ENCODE measurements at regions of chr7 and their contacts with region 1.

Region 1: DNA sequence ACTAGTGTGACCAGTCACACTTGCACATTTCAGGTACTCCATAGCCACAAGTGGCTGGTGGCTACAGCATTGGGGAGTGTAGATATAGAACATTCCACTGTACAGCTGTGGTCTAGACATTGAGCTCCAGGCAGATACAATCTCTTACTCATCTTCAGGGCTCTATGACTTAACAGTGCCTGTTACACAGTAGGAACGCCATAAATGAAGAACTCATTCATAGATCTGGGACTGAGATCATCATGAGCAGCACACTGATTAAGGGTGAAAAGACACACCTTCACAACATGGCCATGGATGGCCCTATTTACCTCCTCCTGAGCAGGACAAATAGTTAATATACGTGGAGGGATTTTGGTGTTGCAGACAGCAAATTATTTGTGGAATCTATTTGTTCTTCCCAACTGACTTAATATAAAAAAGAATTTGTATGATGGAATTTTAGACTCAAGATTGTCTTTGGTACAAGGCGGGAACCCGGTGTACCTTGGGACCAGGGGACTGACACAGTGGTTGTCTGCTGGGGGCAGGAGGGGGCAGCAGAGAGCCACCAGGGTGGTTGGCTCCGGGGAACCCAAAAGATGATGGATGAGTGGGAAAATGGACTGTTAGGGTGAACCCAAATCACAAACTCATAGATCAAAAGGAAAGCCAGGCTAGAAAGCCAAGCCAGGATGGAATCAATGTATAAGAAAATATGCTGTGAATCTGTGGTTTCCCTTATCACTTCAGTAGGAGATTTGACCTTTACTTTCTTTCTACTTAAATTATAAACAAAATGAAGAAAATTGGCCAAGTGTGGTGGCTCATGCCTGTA is 24.3 kb upstream of the CPA2 start:
- DNase-seq: peak; percentile 81
- ATAC-seq: peak; percentile 90
- H3K4me3 Mint-ChIP-seq: no peak overlapping the region
- H3K27ac Mint-ChIP-seq: no peak overlapping the region
- H3K4me1 Mint-ChIP-seq: peaks cover 15% of the 10 kb centered on the region
- H3K27me3 Mint-ChIP-seq: no peaks in the 10 kb centered on the region

Region 2: GRCh38 chr7:130277763-130278643 is 35.6 kb after region 1 on chr7:
- CTCF ChIA-PET with region 1: no interaction called
- POLR2A ChIA-PET with region 1: no interaction called
- intact Hi-C with region 1: loop called in 1 of 2 experiments (anchors 2 kb)
- DNase-seq: no peak
- ATAC-seq: no peak
- H3K4me3 Mint-ChIP-seq: no peak overlapping the region
- H3K27ac Mint-ChIP-seq: peak overlapping the region; percentile 79
- H3K4me1 Mint-ChIP-seq: peaks cover 37% of the 10 kb centered on the region
- H3K27me3 Mint-ChIP-seq: peaks cover 4% of the 10 kb centered on the region

Region 3: GRCh38 chr7:130560970-130561369 is 318.6 kb after region 1 on chr7:
- CTCF ChIA-PET with region 1: no interaction called
- POLR2A ChIA-PET with region 1: no interaction called
- intact Hi-C with region 1: loop called (anchors 1 kb)
- DNase-seq: peak; percentile 17
- ATAC-seq: peak; percentile 44
- H3K4me3 Mint-ChIP-seq: no peak overlapping the region
- H3K27ac Mint-ChIP-seq: no peak overlapping the region
- H3K4me1 Mint-ChIP-seq: no peaks in the 10 kb centered on the region
- H3K27me3 Mint-ChIP-seq: no peaks in the 10 kb centered on the region

Region 4: GRCh38 chr7:130721486-130722280 is 479.3 kb after region 1 on chr7:
- CTCF ChIA-PET with region 1: interaction called, 4 read pairs
- POLR2A ChIA-PET with region 1: no interaction called
- intact Hi-C with region 1: loop called in 1 of 2 experiments (anchors 10 kb)
- DNase-seq: peak; percentile 52
- ATAC-seq: no peak
- H3K4me3 Mint-ChIP-seq: no peak overlapping the region
- H3K27ac Mint-ChIP-seq: no peak overlapping the region
- H3K4me1 Mint-ChIP-seq: no peaks in the 10 kb centered on the region
- H3K27me3 Mint-ChIP-seq: peaks cover 15% of the 10 kb centered on the region

Region 5: DNA sequence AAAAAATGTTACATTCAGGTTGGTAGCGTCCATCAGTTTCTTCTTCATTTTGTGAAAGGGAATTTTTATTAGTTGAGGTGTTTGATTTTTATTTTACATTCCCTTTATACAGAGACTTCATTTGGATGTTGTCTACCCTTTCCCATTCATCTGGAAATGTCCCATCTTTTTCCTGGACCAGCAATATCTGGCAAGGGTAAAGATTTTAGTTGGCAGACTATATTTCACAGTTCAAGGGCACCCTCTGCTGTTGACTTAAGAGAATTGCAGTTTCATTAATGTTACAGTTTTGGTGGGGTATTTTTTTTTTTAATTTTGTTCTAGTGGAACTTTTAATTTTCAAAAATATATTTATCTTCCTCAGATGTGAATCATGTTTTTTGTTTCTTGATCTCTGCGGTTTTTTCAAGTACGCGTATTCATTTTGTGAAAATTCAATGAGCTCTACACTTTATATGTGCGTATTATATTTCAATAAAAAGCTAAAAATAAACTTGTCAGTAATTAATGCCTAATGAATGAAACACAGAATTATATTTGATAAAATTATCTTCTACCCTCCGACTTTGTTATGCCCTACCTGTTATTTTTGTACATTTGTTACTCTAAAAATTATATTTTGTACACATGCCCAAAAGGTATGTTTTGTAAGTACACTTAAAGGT is 589.5 kb after region 1 on chr7:
- CTCF ChIA-PET with region 1: interaction called, 9 read pairs
- POLR2A ChIA-PET with region 1: no interaction called
- intact Hi-C with region 1: loop called (anchors 2 kb)
- DNase-seq: no peak
- ATAC-seq: no peak
- H3K4me3 Mint-ChIP-seq: no peak overlapping the region
- H3K27ac Mint-ChIP-seq: no peak overlapping the region
- H3K4me1 Mint-ChIP-seq: no peaks in the 10 kb centered on the region
- H3K27me3 Mint-ChIP-seq: peaks cover 16% of the 10 kb centered on the region

Measured in activated CD4-positive, alpha-beta T cell treated with anti-CD3 and anti-CD28 coated beads for 36 hours (primary cell).